MCF 10A (cell line): ENCODE measurements at regions of chr11 and their contacts with region 1.

Region 1: GRCh38 chr11:110362971-110363509 is 66.6 kb upstream of the RDX start:
- DNase-seq: peak; percentile 32
- H3K4me3 Mint-ChIP-seq: no peak overlapping the region
- H3K27ac Mint-ChIP-seq: peak overlapping the region; percentile 89
- H3K4me1 Mint-ChIP-seq: peaks cover 16% of the 10 kb centered on the region
- H3K27me3 Mint-ChIP-seq: no peaks in the 10 kb centered on the region
- CTCF ChIP-seq: no peak

Region 2: GRCh38 chr11:110296226-110297075 is 66.6 kb before region 1 on chr11 and contains the start of gene RDX:
- CTCF ChIA-PET with region 1: interaction called, 9 read pairs
- POLR2A ChIA-PET with region 1: interaction called, 5 read pairs
- intact Hi-C with region 1: loop called (anchors 5 kb)
- DNase-seq: peak; percentile 89
- H3K4me3 Mint-ChIP-seq: peak within 1 kb of the TSS; percentile 81
- H3K27ac Mint-ChIP-seq: peak within 1 kb of the TSS; percentile 69
- H3K4me1 Mint-ChIP-seq: peaks cover 18% of the 10 kb centered on the region
- H3K27me3 Mint-ChIP-seq: no peaks in the 10 kb centered on the region
- CTCF ChIP-seq: no peak
- total RNA-seq, gene RDX: 132 and 145 TPM in 2 replicates

Region 3: DNA sequence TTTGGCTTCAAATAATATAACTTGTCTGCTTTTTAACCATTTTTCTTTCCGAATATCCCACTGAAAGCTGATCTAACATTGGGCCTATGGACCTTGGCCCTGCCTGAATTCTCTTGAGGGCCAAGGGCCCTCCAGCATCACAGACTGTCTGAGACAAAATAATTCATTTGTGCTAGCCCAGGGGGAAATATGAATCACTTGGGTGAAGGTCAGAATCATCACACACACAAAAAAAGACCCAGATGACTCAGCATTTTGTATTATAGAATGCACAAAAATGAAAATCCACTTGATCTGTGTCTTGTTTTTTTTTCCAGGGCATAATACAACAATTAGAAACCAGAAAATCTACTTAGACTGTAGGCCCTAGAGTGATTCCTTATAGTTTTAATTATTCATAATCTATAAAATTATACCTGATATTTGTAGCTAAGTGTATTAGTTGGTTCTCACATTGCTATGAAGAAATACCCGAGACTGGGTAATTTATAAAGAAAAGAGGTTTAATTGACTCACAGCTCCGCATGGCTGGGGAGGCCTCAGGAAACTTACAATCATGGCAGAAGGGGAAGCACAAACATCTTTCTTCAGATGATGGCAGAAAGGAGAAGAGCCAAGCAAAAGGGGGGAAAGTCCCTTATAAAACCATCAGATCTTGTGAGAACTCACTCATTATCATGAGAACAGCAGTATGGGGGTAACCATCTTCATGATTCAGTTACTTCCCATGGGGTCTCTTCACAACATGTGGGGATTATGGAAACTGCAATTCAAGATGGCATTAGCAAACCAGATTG is 51.1 kb before region 1 on chr11:
- CTCF ChIA-PET with region 1: no interaction called
- POLR2A ChIA-PET with region 1: no interaction called
- intact Hi-C with region 1: no loop called
- DNase-seq: peak; percentile 57
- H3K4me3 Mint-ChIP-seq: no peak overlapping the region
- H3K27ac Mint-ChIP-seq: no peak overlapping the region
- H3K4me1 Mint-ChIP-seq: peaks cover 10% of the 10 kb centered on the region
- H3K27me3 Mint-ChIP-seq: no peaks in the 10 kb centered on the region
- CTCF ChIP-seq: no peak